Right ventricle myocardium inferior (tissue), 1 donor: ENCODE measurements at regions of chr3 and their contacts with region 1.

Region 1: GRCh38 chr3:136075218-136075808 is 109.8 kb downstream of the PPP2R3A start:
- DNase-seq: no peak
- ATAC-seq: peak; percentile 78

Region 2: DNA sequence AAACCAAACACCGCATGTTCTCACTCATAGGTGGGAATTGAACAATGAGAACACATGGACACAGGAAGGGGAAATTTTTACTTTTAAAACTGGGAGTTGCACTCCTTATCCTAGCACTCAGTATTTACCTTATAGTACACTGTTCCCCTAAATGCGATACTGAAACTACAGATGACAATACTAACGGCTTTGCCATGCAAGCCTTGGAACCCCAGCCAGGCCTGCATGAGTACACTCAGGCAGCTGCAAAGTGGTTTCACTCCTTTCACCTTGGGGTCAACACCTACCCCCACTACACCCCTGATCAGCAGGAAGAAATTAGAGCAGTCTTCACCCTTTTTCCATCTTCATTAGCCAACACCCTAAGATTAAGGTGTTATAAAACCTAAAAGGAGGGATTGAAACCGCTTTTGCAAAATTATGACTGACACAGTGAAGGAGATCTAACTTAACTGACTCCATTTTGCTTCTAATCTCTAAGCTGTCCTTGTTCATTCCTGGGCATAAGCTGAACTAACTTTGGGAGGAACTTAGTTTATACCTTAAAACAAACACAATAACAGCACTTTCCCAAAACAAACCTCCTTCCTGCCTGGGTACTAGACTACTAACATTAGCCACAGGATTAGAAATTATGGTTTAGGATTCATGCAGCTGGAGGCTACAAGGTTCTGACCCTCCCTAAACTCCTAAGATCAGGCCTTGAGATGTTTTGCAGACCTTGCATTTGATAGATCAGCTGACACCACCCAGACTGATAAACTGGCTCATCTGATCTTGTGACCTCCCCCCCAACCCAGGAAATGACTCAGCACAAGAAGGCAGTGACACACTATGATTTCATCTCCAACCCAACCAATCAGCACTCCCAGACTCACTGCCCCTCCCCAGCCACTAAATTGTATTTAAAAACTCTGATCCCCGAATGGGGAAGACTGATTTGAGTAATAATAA is 561.9 kb before region 1 on chr3:
- intact Hi-C with region 1: no loop called
- DNase-seq: no peak
- ATAC-seq: no peak

Region 3: GRCh38 chr3:136196401-136197158 is 121.3 kb after region 1 on chr3:
- intact Hi-C with region 1: loop called (anchors 5 kb)
- DNase-seq: peak; percentile 99
- ATAC-seq: peak; percentile 90

Region 4: DNA sequence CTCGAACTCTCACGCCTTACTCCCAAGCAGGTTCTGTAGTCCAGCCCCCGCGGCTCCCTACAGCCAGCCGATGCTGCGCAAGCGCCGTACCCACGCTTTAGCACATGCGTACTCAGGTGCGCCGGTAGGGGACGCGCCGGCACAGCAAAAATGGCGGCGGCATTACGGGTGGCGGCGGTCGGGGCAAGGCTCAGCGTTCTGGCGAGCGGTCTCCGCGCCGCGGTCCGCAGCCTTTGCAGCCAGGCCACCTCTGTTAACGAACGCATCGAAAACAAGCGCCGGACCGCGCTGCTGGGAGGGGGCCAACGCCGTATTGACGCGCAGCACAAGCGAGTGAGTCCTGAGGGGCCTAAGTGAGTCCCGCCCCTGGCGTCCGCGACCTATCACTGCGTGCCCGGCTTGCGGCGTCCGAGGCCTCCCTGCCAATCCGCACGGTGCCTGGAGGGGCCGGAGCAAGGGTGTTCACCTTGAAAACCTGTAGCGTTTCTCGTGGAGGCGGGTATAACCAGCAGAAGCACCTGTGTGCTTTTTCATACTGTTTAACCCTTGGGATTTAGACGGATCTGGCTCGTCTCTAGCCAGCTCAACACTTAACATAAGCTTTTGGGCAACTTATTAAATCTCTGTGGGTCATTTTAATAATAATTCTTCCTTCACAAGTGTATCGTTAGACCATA is 175.1 kb after region 1 on chr3 and contains the start of gene PCCB:
- intact Hi-C with region 1: loop called (anchors 2 kb)
- DNase-seq: peak; percentile 98
- ATAC-seq: peak; percentile 99
- total RNA-seq, gene PCCB: 98.6 TPM

Region 5: DNA sequence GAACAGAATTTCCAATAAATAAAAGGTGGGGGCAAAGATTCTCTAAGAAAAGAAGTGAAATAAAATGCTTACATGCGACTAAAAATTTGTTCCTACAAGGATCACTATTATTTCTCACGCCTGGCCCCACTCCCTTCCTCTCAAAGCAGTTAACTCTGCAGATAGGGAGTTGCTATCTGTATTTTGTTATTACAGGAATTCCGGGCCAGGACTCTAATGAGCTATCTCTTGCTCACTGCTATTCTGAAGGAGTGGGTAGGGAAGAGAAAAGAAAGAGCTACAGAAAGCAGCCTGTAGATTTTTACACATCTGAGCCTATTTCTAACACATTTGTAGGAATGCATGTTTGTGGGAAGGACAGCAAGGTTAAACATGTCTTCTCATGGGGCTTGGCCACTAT is 315.3 kb after region 1 on chr3:
- intact Hi-C with region 1: loop called (anchors 5 kb)
- DNase-seq: no peak
- ATAC-seq: no peak

Region 6: DNA sequence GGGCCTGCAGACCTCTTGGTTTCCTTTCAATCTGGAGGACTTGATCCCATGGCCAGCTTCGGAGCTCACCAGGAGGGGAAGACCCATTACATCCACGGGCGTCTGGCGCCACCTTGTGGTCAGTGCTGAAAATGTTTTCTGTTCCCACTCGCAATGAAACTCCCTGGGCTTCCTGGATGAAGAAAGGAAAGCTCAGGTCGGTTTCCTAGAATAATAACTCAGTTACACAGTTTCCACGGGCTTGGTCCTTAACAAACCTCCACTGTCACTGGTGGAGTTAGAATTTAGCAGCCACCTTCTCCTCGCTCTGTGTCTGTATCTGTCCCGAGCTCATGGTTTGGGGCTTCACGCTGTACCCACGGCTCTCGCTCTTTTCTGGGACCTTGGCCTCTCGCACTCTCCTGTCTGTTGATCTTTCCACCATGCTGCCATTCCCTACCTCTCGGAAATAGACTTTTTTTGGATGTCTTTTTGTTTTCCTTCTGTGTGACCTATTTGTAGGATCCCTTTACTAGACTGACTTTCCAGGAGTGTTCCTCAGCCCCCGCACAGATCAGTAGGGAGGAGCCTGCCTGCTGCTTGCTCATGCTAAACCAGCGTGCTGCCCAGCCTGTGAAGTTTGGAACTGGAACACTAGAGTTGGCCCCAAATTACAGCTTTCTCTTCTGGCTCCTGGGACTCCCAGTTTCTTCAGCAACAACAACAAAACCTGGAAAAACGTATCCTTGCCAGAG is 938.8 kb after region 1 on chr3:
- intact Hi-C with region 1: loop called (anchors 2 kb)
- DNase-seq: peak; percentile 93
- ATAC-seq: peak; percentile 95